Activated CD4-positive, alpha-beta T cell treated with anti-CD3 and anti-CD28 coated beads, Interleukin-2, amount 10 ng/mL, durations not matched to agents 24 days and 14 days (primary cell): ENCODE measurements at regions of chr1 and their contacts with region 1.

Region 1: GRCh38 chr1:200888349-200888838 is 6.3 kb upstream of the INAVA start:
- DNase-seq: peak; percentile 86
- H3K4me3 Mint-ChIP-seq: peak overlapping the region; percentile 39
- H3K27ac Mint-ChIP-seq: no peak overlapping the region
- H3K4me1 Mint-ChIP-seq: peaks cover 41% of the 10 kb centered on the region
- H3K27me3 Mint-ChIP-seq: peaks cover 41% of the 10 kb centered on the region

Region 2: DNA sequence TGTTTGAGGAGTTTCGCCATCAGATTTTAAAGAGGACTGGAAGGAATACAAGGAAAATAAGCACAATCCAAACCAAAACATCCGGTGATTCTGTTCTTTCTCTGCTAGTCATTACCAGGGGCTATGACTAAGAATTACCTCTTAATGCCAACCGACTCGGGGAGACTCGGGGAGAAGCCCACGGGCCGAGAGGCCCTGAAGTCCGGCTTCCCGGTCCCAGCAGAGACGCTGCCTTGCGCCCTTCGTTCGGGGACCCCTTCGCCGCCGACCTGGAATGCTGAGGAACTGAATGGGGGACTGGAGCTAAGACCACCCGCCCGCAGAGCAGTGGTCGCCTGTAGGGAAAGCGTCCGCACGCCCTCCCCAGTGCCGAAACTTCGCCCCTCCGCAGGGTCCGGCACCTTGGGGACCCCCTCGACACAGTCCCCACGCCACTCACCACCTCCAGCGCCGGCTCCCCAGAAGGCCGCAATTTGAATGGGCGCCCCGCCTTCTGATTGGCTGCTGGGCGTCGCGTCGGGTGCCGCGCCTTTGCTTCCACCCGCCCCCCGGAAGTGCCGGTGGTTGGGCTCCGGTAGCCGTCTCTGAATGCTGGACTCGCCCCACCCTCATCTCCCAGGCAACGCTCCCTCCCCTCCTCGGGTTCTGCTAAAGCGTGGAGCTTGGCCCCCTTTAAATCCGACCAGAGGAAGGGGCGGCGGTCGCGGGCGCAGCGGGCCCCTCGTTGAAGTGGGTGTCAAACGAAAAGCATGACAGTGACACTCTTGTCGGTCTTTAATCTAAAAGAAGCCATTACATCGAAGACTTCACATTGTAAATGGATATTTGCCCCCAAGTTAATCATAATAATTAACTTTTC is 267.9 kb before region 1 on chr1 and contains the start of gene KIF14:
- intact Hi-C with region 1: loop called (anchors 5 kb)
- DNase-seq: peak; percentile 99
- H3K4me3 Mint-ChIP-seq: peak within 1 kb of the TSS; percentile 95
- H3K27ac Mint-ChIP-seq: peak within 1 kb of the TSS; percentile 95
- H3K4me1 Mint-ChIP-seq: peaks cover 47% of the 10 kb centered on the region
- H3K27me3 Mint-ChIP-seq: no peaks in the 10 kb centered on the region
- total RNA-seq, gene KIF14: 11.5 and 11.6 TPM in 2 replicates

Region 3: GRCh38 chr1:200669314-200670241 is 218.8 kb before region 1 on chr1 and contains the start of gene DDX59:
- intact Hi-C with region 1: loop called (anchors 5 kb)
- DNase-seq: peak; percentile 97
- H3K4me3 Mint-ChIP-seq: peak within 1 kb of the TSS; percentile 97
- H3K27ac Mint-ChIP-seq: peak within 1 kb of the TSS; percentile 97
- H3K4me1 Mint-ChIP-seq: peaks cover 33% of the 10 kb centered on the region
- H3K27me3 Mint-ChIP-seq: no peaks in the 10 kb centered on the region
- total RNA-seq, gene DDX59: 14.0 and 14.3 TPM in 2 replicates

Region 4: DNA sequence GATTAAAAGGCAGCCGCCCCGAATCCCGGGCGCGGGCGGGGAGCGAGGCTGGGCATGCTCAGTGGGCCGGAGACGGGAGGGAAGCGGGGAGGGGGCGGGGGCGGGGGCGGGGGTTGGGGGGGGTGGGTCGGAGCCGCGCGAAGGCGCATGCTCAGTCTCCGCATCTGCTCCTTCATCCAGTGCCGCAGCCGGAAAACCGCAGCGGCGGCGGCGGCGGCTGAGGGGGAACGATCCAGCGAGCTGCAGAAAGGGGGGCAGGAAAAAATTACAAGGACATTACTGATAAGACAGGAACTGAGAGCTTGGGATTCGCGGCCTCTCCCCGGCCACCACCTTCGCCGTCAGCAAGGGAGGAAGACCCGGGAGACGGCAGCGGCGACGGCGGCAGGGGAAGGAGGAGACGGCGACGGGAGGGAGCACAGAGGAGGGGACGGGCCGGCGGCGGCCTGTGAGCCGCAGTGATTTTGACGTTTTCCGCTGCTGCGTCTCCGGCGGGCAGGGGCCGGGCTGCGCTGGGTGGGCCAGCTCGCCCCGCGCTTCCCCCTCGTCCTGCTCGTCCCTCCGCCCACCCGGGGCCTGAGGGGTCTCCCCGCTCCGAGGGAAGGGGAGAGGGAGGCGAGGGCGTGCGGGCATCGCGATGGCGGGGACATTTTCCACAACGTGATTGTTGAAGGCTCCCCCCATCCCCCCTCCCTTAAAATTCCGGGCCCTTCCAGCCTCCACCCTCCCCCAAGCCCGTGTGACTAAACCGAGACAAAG is 149.5 kb before region 1 on chr1 and contains the start of gene CAMSAP2:
- intact Hi-C with region 1: loop called (anchors 10 kb)
- DNase-seq: peak; percentile 89
- H3K4me3 Mint-ChIP-seq: peak within 1 kb of the TSS; percentile 94
- H3K27ac Mint-ChIP-seq: peak within 1 kb of the TSS; percentile 87
- H3K4me1 Mint-ChIP-seq: peaks cover 21% of the 10 kb centered on the region
- H3K27me3 Mint-ChIP-seq: peaks cover 38% of the 10 kb centered on the region
- total RNA-seq, gene CAMSAP2: 1.4 and 2.5 TPM in 2 replicates

Region 5: DNA sequence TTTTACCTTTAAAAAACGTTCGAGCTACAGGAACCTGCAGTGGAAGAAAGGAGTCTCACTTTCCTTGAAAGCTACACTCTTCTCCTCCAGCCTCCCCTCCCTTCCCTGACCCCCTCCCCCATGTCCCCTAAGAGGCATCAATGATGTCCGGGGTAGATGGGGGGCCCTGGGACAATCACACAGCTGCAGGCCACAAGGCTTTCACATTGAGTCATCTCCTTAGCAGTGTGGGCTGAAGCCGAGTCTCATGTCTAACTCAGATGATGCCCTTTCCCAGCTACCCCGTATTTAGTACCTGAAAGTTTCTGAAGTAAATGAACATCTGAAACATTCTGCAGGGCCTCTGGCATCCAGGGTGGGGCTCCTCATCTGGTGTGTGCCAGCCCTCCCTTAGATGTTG is 21.9 kb before region 1 on chr1:
- intact Hi-C with region 1: loop called (anchors 1 kb)
- DNase-seq: peak; percentile 73
- H3K4me3 Mint-ChIP-seq: no peak overlapping the region
- H3K27ac Mint-ChIP-seq: no peak overlapping the region
- H3K4me1 Mint-ChIP-seq: peaks cover 18% of the 10 kb centered on the region
- H3K27me3 Mint-ChIP-seq: peaks cover 37% of the 10 kb centered on the region

Region 6: GRCh38 chr1:200877839-200878551 is 10.4 kb before region 1 on chr1:
- intact Hi-C with region 1: loop called (anchors 1 kb)
- DNase-seq: peak; percentile 53
- H3K4me3 Mint-ChIP-seq: no peak overlapping the region
- H3K27ac Mint-ChIP-seq: no peak overlapping the region
- H3K4me1 Mint-ChIP-seq: peaks cover 8% of the 10 kb centered on the region
- H3K27me3 Mint-ChIP-seq: peaks cover 50% of the 10 kb centered on the region

Region 7: DNA sequence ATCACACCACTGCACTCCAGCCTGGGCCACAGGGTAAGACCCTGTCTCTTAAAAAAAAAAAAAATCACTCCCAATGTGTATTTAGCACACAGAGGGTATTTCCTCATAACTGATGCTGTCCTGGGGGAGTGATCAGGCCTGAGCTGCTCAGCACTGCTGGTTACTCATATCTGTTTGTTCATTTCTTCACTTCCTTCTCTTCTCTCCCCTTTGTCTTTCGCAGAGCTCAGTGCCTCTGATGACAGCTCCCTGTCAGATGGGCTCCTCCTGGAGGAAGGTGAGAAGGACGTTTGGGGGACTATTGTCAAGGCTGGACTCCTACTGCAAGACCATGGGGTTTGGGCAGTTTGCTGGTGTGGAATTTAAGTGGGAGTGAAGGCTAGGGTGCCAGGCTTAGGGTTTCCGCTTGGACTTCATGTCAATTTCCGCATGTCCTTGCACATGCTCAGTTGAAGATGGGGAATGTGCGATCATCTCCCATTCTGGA is 19.3 kb after region 1 on chr1:
- intact Hi-C with region 1: loop called (anchors 1 kb)
- DNase-seq: no peak
- H3K4me3 Mint-ChIP-seq: no peak overlapping the region
- H3K27ac Mint-ChIP-seq: no peak overlapping the region
- H3K4me1 Mint-ChIP-seq: peaks cover 6% of the 10 kb centered on the region
- H3K27me3 Mint-ChIP-seq: peaks cover 27% of the 10 kb centered on the region

Region 8: DNA sequence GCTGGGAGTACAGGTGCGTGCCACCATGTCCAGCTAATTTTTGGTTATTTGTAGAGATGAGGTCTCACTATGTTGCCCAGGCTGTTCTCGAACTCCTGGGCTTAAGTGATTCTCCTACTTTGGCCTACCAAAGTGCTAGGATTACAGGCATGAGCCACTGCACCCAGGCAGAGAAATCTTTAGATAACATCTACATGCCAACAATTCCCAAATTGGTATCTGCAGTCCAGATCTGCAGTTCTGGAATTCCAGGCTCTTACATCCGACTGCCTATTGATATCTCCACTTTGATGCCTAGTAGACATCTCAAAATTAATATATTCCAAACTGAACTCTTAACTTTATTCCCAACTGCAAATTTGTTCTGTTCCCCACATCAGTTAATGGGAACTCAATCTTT is 29.6 kb after region 1 on chr1:
- intact Hi-C with region 1: no loop called
- DNase-seq: no peak
- H3K4me3 Mint-ChIP-seq: no peak overlapping the region
- H3K27ac Mint-ChIP-seq: no peak overlapping the region
- H3K4me1 Mint-ChIP-seq: no peaks in the 10 kb centered on the region
- H3K27me3 Mint-ChIP-seq: peaks cover 23% of the 10 kb centered on the region

Region 9: GRCh38 chr1:201241736-201242135 is 353.3 kb after region 1 on chr1:
- intact Hi-C with region 1: no loop called
- DNase-seq: no peak
- H3K4me3 Mint-ChIP-seq: no peak overlapping the region
- H3K27ac Mint-ChIP-seq: no peak overlapping the region
- H3K4me1 Mint-ChIP-seq: no peaks in the 10 kb centered on the region
- H3K27me3 Mint-ChIP-seq: peaks cover 29% of the 10 kb centered on the region